Caco-2 (cell line): ENCODE measurements at regions of chr10 and their contacts with region 1.

Region 1: DNA sequence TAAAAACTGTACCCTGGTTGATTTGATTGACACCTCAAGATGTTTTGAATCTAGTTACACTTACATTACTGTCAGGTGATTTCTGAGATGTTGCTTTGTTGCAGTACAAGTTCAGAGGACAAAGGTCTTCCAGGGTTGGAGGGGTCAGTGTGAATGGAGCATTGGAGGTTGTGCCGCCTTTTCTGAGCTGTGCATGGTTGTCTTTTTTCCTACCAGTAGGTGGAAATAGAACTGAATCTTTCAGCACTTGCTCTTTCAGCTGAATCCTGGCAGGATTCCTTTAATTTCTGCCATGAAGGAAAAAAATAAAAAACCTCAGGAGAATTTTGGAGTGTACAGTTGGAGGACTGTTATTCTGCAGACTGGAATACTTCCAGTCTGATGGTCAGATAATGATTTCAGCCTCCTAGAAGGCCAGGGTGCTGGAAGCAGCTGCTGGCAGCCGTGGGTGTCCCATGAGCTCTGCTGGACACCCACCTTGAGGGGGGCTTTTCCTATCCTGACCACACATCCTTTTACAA is 82.7 kb downstream of the PLCE1 start:
- DNase-seq: peak; percentile 74
- H3K4me3 ChIP-seq: no peak overlapping the region
- H3K4me3 Mint-ChIP-seq: no peak overlapping the region
- H3K27ac Mint-ChIP-seq: peak overlapping the region; percentile 43
- H3K4me1 ChIP-seq: peaks cover 17% of the 10 kb centered on the region
- H3K4me1 Mint-ChIP-seq: peaks cover 15% of the 10 kb centered on the region
- H3K27me3 ChIP-seq: no peaks in the 10 kb centered on the region
- H3K27me3 Mint-ChIP-seq: no peaks in the 10 kb centered on the region
- CTCF ChIP-seq: peak; percentile 58 to 60

Region 2: GRCh38 chr10:94123258-94123995 is 47.0 kb after region 1 on chr10:
- CTCF ChIA-PET with region 1: interaction called, 16 read pairs
- POLR2A ChIA-PET with region 1: no interaction called
- intact Hi-C with region 1: loop called (anchors 2 kb)
- DNase-seq: peak; percentile 79 to 84
- H3K4me3 ChIP-seq: no peak overlapping the region
- H3K4me3 Mint-ChIP-seq: peak overlapping the region; percentile 47
- H3K27ac Mint-ChIP-seq: no peak overlapping the region
- H3K4me1 ChIP-seq: peaks cover 45% of the 10 kb centered on the region
- H3K4me1 Mint-ChIP-seq: peaks cover 22% of the 10 kb centered on the region
- H3K27me3 ChIP-seq: no peaks in the 10 kb centered on the region
- H3K27me3 Mint-ChIP-seq: no peaks in the 10 kb centered on the region
- CTCF ChIP-seq: no peak

Region 3: DNA sequence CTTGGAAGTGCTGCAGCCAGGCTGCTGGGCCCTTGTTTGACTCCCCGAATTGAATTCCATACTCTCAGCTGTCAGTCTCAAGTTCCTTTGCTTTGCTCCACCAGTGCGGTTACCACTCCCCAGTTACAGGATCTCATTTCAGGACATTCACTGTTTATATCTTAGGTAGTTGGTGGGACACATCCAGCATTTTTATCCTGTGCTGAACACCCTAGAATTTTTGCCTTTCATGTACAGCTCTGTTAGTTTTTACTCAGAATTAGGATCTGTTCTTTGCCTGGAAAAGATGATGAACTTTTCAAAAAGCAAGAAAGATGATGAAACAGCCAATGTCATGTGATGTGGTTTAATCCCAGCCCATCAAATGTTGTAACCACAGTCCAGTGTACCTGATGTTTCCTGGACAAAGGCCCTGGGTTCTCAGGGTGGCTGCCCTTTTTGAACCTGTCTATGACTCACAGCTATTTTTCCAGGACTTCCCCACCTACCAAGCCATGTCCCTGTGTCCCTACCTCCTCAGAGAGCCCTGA is 136.7 kb after region 1 on chr10:
- CTCF ChIA-PET with region 1: interaction called, 4 read pairs
- POLR2A ChIA-PET with region 1: no interaction called
- intact Hi-C with region 1: loop called (anchors 5 kb)
- DNase-seq: no peak
- H3K4me3 ChIP-seq: no peak overlapping the region
- H3K4me3 Mint-ChIP-seq: no peak overlapping the region
- H3K27ac Mint-ChIP-seq: peak overlapping the region; percentile 51
- H3K4me1 ChIP-seq: no peaks in the 10 kb centered on the region
- H3K4me1 Mint-ChIP-seq: peaks cover 6% of the 10 kb centered on the region
- H3K27me3 ChIP-seq: no peaks in the 10 kb centered on the region
- H3K27me3 Mint-ChIP-seq: no peaks in the 10 kb centered on the region
- CTCF ChIP-seq: no peak

Region 4: DNA sequence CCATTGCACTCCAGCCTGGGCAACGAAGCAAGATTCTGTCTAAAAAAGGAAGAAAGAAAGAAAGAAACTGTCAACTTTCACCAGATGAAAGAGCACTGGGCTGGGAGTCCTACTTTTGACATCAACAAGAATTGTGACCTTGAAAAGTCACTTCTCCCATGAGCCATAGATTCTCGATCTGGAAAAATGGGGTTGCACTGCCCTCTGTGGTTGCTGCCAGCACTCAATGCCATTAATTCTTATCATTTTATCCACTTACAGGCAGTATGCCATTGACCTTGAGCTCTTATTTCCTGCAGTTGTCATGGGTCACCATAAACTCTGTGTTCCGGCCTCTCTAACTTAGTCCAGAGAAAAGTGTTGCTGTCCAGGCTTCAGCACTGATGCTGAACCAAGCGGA is 149.2 kb after region 1 on chr10:
- CTCF ChIA-PET with region 1: interaction called, 4 read pairs
- POLR2A ChIA-PET with region 1: no interaction called
- intact Hi-C with region 1: loop called (anchors 1 kb)
- DNase-seq: peak in 1 of 2 experiments; percentile 9
- H3K4me3 ChIP-seq: no peak overlapping the region
- H3K4me3 Mint-ChIP-seq: no peak overlapping the region
- H3K27ac Mint-ChIP-seq: no peak overlapping the region
- H3K4me1 ChIP-seq: no peaks in the 10 kb centered on the region
- H3K4me1 Mint-ChIP-seq: no peaks in the 10 kb centered on the region
- H3K27me3 ChIP-seq: no peaks in the 10 kb centered on the region
- H3K27me3 Mint-ChIP-seq: no peaks in the 10 kb centered on the region
- CTCF ChIP-seq: no peak

Region 5: GRCh38 chr10:94279835-94280709 is 203.7 kb after region 1 on chr10:
- CTCF ChIA-PET with region 1: no interaction called
- POLR2A ChIA-PET with region 1: no interaction called
- intact Hi-C with region 1: loop called (anchors 5 kb)
- DNase-seq: peak; percentile 56 to 79
- H3K4me3 ChIP-seq: no peak overlapping the region
- H3K4me3 Mint-ChIP-seq: no peak overlapping the region
- H3K27ac Mint-ChIP-seq: no peak overlapping the region
- H3K4me1 ChIP-seq: no peaks in the 10 kb centered on the region
- H3K4me1 Mint-ChIP-seq: peaks cover 9% of the 10 kb centered on the region
- H3K27me3 ChIP-seq: no peaks in the 10 kb centered on the region
- H3K27me3 Mint-ChIP-seq: no peaks in the 10 kb centered on the region
- CTCF ChIP-seq: peak; percentile 93 to 95

Region 6: DNA sequence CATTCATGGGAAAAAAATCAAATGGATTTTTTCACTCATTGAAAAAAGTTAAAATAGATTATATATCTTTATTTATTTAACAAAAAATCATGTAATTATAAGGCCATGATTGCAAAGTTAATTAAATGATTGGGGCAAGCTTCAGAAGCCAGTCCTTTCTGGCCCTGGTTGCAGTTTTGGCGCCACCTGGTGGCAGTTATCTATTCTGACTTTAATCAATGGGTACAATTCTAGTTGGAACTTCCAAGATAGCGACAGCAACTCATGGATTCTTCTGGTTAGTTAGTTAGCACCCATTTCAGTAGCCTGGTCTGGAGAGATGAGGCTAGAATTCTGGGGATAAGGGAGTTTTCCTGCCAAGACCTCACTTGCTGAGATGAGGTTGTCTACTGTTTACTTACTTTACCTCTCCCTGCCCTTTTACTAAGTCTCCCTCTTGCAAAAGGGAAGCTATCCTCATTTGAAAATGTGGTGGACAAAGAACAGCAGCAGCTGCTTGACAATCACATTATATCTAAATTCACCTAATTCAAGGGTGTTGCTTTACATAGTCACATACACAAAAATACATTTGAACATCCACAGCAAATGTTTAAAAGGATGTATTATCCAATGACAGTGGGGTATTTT is 244.0 kb after region 1 on chr10:
- CTCF ChIA-PET with region 1: interaction called, 17 read pairs
- POLR2A ChIA-PET with region 1: no interaction called
- intact Hi-C with region 1: loop called (anchors 1 kb)
- DNase-seq: peak; percentile 58 to 77
- H3K4me3 ChIP-seq: no peak overlapping the region
- H3K4me3 Mint-ChIP-seq: no peak overlapping the region
- H3K27ac Mint-ChIP-seq: no peak overlapping the region
- H3K4me1 ChIP-seq: peaks cover 15% of the 10 kb centered on the region
- H3K4me1 Mint-ChIP-seq: no peaks in the 10 kb centered on the region
- H3K27me3 ChIP-seq: no peaks in the 10 kb centered on the region
- H3K27me3 Mint-ChIP-seq: no peaks in the 10 kb centered on the region
- CTCF ChIP-seq: peak; percentile 82 to 85